AG04449 (cell line): ENCODE measurements at regions of chr2 and their contacts with region 1.

Region 1: GRCh38 chr2:9984217-9984739 is 32.8 kb downstream of the GRHL1 start:
- DNase-seq: no peak
- H3K4me3 ChIP-seq: no peak overlapping the region
- CTCF ChIP-seq: peak; percentile 19

Region 2: GRCh38 chr2:9234680-9235387 is 749.4 kb before region 1 on chr2:
- CTCF ChIA-PET with region 1: no interaction called
- POLR2A ChIA-PET with region 1: no interaction called
- DNase-seq: peak; percentile 42
- H3K4me3 ChIP-seq: no peak overlapping the region
- CTCF ChIP-seq: no peak

Region 3: DNA sequence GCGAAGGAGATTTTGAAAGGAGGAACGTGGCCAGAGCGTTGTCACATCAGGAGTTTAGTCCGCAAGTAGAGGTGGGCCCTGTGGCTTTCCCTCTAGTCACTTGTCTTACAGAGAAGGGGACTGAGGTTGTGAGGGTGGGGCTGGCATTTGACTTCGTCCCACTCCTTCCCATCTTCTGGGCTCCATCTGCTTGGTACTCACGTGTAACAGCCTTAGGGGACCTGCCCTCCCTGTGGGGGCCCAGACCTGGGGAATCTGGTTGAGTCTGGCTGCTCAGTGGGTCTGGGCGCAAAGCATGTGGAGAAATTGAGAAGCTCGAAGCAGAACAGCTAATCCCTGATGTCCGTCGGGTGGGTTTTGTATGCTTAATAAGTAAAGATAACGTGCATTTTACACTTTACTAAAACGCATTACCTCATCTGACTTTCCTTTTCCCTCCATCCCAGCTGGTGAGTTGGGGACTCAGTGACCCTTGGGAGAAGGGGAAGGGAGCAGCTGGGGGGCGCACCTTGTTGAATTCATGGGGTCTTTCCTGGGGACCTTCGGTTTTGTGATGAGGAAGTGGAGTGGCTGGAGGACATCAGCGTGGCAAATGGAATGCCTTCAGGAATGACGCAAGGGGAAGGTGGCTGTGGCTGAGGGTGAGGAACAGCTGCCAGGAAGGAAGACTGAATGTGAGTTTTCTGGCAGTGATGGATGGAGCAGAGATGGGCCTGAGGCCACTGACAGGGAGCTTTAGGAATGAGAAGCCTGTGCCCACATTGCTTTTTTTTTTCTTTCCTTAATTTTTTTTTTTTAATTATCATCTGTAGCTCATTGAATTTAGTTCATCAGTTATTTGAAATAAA is 732.9 kb before region 1 on chr2:
- CTCF ChIA-PET with region 1: no interaction called
- POLR2A ChIA-PET with region 1: no interaction called
- DNase-seq: peak; percentile 37
- H3K4me3 ChIP-seq: no peak overlapping the region; the same call in 1 of the 2 replicates
- CTCF ChIP-seq: no peak

Region 4: DNA sequence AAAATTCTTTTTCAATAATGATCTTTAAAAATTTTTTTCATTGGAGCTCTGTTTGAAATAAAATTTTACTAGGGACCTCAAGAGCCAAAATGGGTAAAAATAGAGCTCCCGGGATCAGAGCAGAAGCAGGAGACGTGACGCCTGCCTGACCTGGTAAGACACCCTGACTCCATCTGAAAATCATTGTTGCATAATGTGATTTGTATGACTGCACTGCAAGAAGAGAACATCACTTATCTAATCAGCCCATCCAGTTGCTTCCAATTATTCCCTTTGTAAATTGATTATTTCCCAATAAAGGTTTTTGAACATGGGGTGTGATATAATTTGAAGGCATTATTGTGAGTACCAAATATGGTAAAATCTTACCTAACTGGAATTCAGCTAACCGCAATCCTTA is 158.1 kb before region 1 on chr2:
- CTCF ChIA-PET with region 1: no interaction called
- POLR2A ChIA-PET with region 1: no interaction called
- DNase-seq: no peak
- H3K4me3 ChIP-seq: no peak overlapping the region
- CTCF ChIP-seq: no peak

Region 5: GRCh38 chr2:9843229-9844035 is 140.8 kb before region 1 on chr2 and contains the start of gene TAF1B:
- CTCF ChIA-PET with region 1: interaction called, 13 read pairs
- POLR2A ChIA-PET with region 1: no interaction called
- DNase-seq: no peak
- H3K4me3 ChIP-seq: peak within 1 kb of the TSS; percentile 81
- CTCF ChIP-seq: peak; percentile 15

Region 6: DNA sequence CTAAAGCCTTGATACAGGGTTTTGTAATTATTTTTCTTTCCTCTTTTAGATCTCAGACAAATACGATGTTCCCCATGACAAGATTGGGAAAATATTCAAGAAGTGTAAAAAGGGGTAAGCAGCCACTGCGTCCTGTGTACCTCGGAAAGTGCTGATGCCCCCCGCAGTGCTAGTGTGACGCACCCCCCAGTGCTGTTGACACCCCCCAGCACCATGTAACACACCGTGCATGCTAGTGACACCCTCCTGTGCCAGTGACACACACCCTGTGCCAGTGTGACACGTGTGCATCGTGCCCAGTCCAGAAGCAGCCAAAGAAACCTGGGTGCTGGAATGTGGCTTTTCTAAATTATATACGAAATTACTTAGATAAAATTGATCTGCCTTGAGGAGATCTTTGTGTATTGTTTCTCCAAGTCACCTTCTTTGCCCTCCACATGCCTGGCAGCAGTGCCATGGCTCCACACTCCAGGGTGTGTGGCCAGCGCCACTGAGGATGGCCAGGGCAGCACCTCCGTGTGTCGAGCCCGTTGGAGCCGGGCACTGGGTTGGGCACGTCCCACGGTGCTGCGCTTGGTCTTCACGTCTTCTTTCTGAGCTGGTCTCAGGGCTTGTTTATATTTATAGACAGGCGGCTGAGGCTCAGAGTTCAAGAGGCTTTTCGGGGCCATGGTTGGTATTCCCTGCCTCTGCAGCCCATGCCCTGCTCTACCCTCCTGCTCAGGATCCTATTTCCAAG is 14.8 kb after region 1 on chr2:
- CTCF ChIA-PET with region 1: interaction called, 56 read pairs
- POLR2A ChIA-PET with region 1: no interaction called
- DNase-seq: no peak
- H3K4me3 ChIP-seq: no peak overlapping the region
- CTCF ChIP-seq: no peak

Region 7: DNA sequence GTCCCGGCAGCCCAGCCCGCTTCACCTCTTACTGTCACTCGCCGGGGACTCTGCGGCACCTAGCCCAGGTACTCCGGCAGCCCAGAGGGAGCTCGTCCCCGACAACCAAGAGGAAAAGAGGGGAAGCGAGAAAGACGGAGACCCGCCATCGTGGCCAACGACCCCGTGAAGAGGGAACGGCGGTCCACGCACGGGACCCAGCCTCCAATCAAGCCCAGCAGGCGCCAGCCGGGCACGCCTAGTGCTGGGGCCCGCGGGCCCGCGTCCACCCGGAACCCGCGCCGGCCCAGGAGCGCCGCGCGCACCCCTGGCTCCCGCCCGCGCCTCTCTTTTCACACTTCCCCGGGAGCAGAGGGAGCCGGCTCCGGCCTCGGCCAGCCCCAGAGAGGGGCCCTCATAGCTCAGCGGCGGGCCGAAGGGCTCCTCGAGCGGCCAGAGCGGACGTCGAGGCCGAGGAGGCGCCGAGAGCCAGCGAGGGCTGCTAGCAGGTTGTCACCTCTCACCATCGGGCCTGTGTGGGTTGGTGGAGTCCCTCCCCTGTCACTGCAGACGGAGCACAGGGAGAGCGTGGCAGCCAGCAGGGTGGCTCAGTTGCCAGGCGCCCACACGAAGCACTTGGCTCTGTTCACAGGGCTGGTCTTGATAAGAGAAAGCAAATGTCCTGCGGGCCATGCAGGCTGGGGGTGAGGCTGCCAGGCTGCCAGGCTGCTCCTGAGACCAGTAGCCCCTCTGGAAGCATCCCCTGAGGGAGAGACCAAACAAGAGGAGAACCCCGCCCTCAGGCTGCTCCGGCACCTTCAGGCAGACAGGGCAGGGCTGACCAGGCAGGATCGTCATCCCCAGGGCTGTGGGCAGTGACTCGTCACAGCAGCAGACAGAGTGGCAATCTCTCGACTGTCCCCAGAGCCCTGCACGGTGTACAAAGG is 22.2 kb after region 1 on chr2:
- CTCF ChIA-PET with region 1: interaction called, 14 read pairs
- POLR2A ChIA-PET with region 1: interaction called, 4 read pairs
- DNase-seq: no peak
- H3K4me3 ChIP-seq: no peak overlapping the region
- CTCF ChIP-seq: no peak

Region 8: GRCh38 chr2:10043906-10044601 is 59.8 kb after region 1 on chr2:
- CTCF ChIA-PET with region 1: interaction called, 67 read pairs
- POLR2A ChIA-PET with region 1: interaction called, 3 read pairs
- DNase-seq: no peak
- H3K4me3 ChIP-seq: peak overlapping the region; percentile 64
- CTCF ChIP-seq: no peak